Astrocyte of the cerebellum (primary cell): ENCODE measurements at regions of chr11 and their contacts with region 1.

Region 1: GRCh38 chr11:75365711-75366181 is 14.3 kb upstream of the ARRB1 start:
- DNase-seq: no peak
- H3K4me3 ChIP-seq: no peak overlapping the region
- CTCF ChIP-seq: no peak

Region 2: GRCh38 chr11:75275581-75275980 is 90.2 kb before region 1 on chr11:
- in situ Hi-C with region 1: loop called (anchors 5 kb)
- DNase-seq: no peak
- H3K4me3 ChIP-seq: no peak overlapping the region
- CTCF ChIP-seq: no peak

Region 3: DNA sequence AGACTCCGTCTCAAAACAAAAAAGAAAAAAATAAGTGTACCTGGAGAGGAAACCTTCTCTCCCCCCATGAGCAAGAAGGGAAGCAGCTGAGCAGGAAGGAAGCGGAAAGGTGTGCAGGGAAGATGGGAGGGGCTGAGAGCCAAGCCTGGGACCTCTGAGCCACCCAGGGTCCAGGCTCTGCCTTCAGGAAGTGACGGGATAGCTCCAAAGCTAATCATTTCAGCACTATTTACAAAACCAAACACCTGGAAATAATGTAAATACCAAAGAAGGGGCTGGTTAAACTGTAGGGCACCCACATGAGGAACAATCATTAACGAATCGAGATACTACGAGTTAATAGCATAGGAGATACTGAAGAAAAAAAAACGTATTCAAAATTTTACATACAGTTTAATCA is 42.1 kb before region 1 on chr11:
- in situ Hi-C with region 1: loop called (anchors 5 kb)
- DNase-seq: no peak
- H3K4me3 ChIP-seq: no peak overlapping the region
- CTCF ChIP-seq: no peak

Region 4: DNA sequence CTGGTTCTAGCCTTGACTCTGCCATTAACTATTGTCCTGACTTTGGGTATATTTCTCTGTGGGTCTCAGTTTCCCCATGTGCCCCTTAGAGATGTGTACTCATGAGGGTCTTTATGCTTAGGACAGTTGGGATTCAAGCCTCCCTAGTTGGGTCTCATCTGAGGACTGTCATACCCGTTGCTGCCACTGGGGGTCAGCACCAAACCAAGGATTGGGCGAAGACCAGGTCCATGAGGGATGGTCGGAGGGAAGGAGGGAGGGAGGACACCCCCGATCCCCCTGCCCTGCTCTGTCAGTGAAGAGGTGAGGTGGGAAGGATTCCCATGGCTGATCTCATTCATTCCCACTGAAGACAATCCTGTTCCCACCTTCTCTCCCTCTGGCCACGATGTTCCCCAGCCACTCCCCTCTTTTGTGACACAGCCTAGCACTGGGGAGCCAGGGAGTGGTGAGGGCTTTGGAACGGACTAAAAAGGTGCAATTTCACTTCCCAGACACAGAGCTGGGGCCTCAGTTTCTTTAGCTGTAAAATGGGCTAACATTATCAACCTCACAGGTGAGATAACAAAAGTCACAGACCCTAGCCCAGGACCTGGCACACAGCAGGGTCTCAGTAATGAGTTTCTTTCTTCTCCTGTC is 79.7 kb after region 1 on chr11:
- in situ Hi-C with region 1: no loop called
- DNase-seq: peak; percentile 11
- H3K4me3 ChIP-seq: no peak overlapping the region
- CTCF ChIP-seq: peak; percentile 92